ENCODE measurements at regions of chr10 and their contacts with region 1.

Region 1: DNA sequence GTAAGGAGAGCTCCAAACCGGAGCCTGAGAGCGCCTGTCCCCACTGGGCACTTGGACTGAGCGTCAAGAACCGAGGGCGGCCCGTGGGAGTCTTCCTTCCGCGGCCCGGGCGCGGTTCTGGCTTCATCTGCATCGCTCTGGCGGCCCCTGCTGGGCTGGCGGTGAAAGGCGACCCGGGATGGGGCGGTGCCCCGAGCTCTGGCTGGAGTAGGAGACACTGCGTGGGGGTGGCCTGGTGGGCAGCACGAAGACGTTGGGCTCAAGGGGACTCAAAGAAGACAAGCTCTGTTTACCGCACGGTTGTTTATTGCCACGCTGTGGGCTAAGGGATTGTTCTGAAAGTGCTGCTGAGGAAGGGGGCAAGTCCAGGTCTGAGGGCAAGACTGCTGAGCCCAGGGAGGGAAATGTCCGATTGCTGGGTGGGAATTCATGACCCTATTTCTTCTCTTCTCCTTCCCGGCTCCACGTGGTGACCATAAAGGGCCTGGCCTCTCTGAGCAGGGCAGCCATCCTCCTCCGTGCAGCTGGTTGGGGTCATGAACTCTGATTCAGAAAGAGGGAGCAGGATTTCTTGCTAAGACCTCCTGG is 29.8 kb downstream of the PLAU start:
- DNase-seq: peak; percentile 78
- ATAC-seq: peak; percentile 100
- H3K4me3 ChIP-seq: peak overlapping the region in 2 of 5 experiments; percentile 15 to 30
- H3K4me3 Mint-ChIP-seq: peak overlapping the region; percentile 71
- H3K27ac ChIP-seq: no peak overlapping the region
- H3K27ac Mint-ChIP-seq: peak overlapping the region; percentile 50
- H3K4me1 ChIP-seq: peaks cover 0 to 8% of the 10 kb centered on the region in 2 donors
- H3K4me1 Mint-ChIP-seq: peaks cover 7% of the 10 kb centered on the region
- H3K27me3 ChIP-seq: no peaks in the 10 kb centered on the region
- H3K27me3 Mint-ChIP-seq: peaks cover 4% of the 10 kb centered on the region
- CTCF ChIP-seq: peak; percentile 96

Region 2: GRCh38 chr10:73732931-73733623 is 207.7 kb before region 1 on chr10:
- CTCF ChIA-PET with region 1: no interaction called
- POLR2A ChIA-PET with region 1: no interaction called
- intact Hi-C with region 1: no loop called
- DNase-seq: no peak
- ATAC-seq: no peak
- H3K4me3 ChIP-seq: no peak overlapping the region
- H3K4me3 Mint-ChIP-seq: no peak overlapping the region
- H3K27ac ChIP-seq: no peak overlapping the region
- H3K27ac Mint-ChIP-seq: no peak overlapping the region
- H3K4me1 ChIP-seq: peaks cover 7 to 8% of the 10 kb centered on the region in 2 donors
- H3K4me1 Mint-ChIP-seq: peaks cover 20% of the 10 kb centered on the region
- H3K27me3 ChIP-seq: no peaks in the 10 kb centered on the region
- H3K27me3 Mint-ChIP-seq: no peaks in the 10 kb centered on the region
- CTCF ChIP-seq: no peak

Region 3: GRCh38 chr10:73848821-73849489 is 91.8 kb before region 1 on chr10:
- CTCF ChIA-PET with region 1: interaction called, 65 read pairs
- POLR2A ChIA-PET with region 1: interaction called, 4 read pairs
- intact Hi-C with region 1: loop called (anchors 1 kb)
- DNase-seq: peak; percentile 96
- ATAC-seq: peak; percentile 100
- H3K4me3 ChIP-seq: no peak overlapping the region
- H3K4me3 Mint-ChIP-seq: peak overlapping the region; percentile 12
- H3K27ac ChIP-seq: peak overlapping the region; percentile 51 to 71
- H3K27ac Mint-ChIP-seq: peak overlapping the region; percentile 47
- H3K4me1 ChIP-seq: peaks cover 7 to 17% of the 10 kb centered on the region in 2 donors
- H3K4me1 Mint-ChIP-seq: peaks cover 13% of the 10 kb centered on the region
- H3K27me3 ChIP-seq: no peaks in the 10 kb centered on the region
- H3K27me3 Mint-ChIP-seq: no peaks in the 10 kb centered on the region
- CTCF ChIP-seq: peak; percentile 99

Region 4: DNA sequence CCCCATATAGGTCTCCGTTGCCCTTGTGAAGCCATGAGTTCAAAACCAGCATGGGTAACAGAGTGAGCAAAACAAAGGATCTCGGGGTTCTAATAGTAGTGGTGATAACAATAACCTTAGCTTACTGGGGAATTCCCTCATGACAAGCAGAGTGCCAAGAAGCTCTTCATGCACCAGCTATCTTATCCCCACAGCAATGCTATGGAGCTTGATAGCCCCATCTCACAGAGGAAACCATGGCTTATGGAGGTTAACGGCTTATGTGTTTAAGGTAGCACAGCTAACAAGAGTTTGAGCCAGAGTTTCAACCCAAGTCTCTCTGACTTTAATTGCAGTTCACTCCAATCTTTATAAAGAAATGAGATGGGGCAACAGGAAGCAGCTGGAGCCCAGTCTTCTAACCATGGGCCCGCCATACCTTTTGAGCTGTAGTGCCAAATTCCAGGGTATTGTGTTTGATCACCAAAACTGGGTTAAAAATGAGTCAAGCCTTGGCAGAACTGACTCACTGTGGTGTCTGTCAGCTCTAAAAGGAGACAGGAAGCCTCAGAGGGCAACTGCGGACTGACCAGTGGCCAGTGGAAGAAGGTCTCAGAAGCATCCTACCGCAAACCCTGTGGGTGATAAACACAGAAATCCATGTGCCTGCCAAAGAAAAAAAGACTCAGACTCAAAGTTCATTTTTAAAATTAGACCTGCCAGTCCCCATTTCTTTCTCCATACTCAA is 46.3 kb before region 1 on chr10:
- CTCF ChIA-PET with region 1: interaction called, 261 read pairs
- POLR2A ChIA-PET with region 1: no interaction called
- intact Hi-C with region 1: no loop called
- DNase-seq: no peak
- ATAC-seq: no peak
- H3K4me3 ChIP-seq: no peak overlapping the region
- H3K4me3 Mint-ChIP-seq: no peak overlapping the region
- H3K27ac ChIP-seq: no peak overlapping the region
- H3K27ac Mint-ChIP-seq: no peak overlapping the region
- H3K4me1 ChIP-seq: peaks cover 0 to 8% of the 10 kb centered on the region in 2 donors
- H3K4me1 Mint-ChIP-seq: peaks cover 1% of the 10 kb centered on the region
- H3K27me3 ChIP-seq: peaks cover 0 to 4% (median 0%) of the 10 kb centered on the region in 4 experiments
- H3K27me3 Mint-ChIP-seq: no peaks in the 10 kb centered on the region
- CTCF ChIP-seq: no peak

Region 5: DNA sequence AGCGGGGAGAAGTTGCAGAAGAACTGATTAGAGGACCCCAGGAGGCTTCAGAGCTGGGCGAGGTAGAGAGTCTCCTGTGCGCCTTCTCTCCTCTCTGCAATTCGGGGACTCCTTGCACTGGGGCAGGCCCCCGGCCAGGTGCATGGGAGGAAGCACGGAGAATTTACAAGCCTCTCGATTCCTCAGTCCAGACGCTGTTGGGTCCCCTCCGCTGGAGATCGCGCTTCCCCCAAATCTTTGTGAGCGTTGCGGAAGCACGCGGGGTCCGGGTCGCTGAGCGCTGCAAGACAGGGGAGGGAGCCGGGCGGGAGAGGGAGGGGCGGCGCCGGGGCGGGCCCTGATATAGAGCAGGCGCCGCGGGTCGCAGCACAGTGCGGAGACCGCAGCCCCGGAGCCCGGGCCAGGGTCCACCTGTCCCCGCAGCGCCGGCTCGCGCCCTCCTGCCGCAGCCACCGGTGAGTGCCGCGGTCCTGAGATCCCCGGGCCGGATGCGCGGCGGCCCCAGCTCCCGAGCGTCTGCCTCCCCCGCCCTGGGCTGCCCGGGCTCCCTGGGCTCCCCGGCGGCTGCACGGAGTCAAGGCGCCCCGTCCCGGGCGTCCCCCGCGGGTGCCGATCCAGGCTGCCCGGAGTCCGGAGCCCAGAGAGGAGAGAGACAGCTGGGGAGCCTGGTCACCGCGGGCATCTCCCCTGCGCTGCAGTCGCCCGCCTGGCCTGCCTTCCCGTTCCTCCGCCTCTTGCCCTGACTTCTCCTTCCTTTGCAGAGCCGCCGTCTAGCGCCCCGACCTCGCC is 29.8 kb before region 1 on chr10 and contains the start of gene PLAU:
- CTCF ChIA-PET with region 1: interaction called, 11 read pairs
- POLR2A ChIA-PET with region 1: no interaction called
- intact Hi-C with region 1: no loop called
- DNase-seq: peak; percentile 59
- ATAC-seq: peak; percentile 62
- H3K4me3 ChIP-seq: peak within 1 kb of the TSS; percentile 9 to 63 (median 52)
- H3K4me3 Mint-ChIP-seq: peak within 1 kb of the TSS; percentile 97
- H3K27ac ChIP-seq: no peak within 1 kb of the TSS
- H3K27ac Mint-ChIP-seq: peak within 1 kb of the TSS; percentile 59
- H3K4me1 ChIP-seq: peaks cover 23 to 35% of the 10 kb centered on the region in 2 donors
- H3K4me1 Mint-ChIP-seq: peaks cover 34% of the 10 kb centered on the region
- H3K27me3 ChIP-seq: peaks cover 0 to 43% (median 16%) of the 10 kb centered on the region in 4 experiments
- H3K27me3 Mint-ChIP-seq: peaks cover 27% of the 10 kb centered on the region
- CTCF ChIP-seq: no peak
- total RNA-seq, gene PLAU: not detected in 2 replicates

Region 6: GRCh38 chr10:73956476-73957359 is 16.0 kb after region 1 on chr10:
- CTCF ChIA-PET with region 1: interaction called, 45 read pairs
- POLR2A ChIA-PET with region 1: no interaction called
- intact Hi-C with region 1: loop called (anchors 2 kb)
- DNase-seq: peak; percentile 82
- ATAC-seq: peak; percentile 61
- H3K4me3 ChIP-seq: peak overlapping the region; percentile 13 to 42 (median 24)
- H3K4me3 Mint-ChIP-seq: peak overlapping the region; percentile 83
- H3K27ac ChIP-seq: peak overlapping the region; percentile 92 to 93
- H3K27ac Mint-ChIP-seq: peak overlapping the region; percentile 99
- H3K4me1 ChIP-seq: peaks cover 50 to 54% of the 10 kb centered on the region in 2 donors
- H3K4me1 Mint-ChIP-seq: peaks cover 56% of the 10 kb centered on the region
- H3K27me3 ChIP-seq: no peaks in the 10 kb centered on the region
- H3K27me3 Mint-ChIP-seq: no peaks in the 10 kb centered on the region
- CTCF ChIP-seq: no peak

Region 7: GRCh38 chr10:73974309-73974946 is 33.7 kb after region 1 on chr10:
- CTCF ChIA-PET with region 1: no interaction called
- POLR2A ChIA-PET with region 1: no interaction called
- intact Hi-C with region 1: no loop called
- DNase-seq: no peak
- ATAC-seq: no peak
- H3K4me3 ChIP-seq: peak overlapping the region in 1 of 5 experiments; percentile 15
- H3K4me3 Mint-ChIP-seq: peak overlapping the region; percentile 8
- H3K27ac ChIP-seq: no peak overlapping the region
- H3K27ac Mint-ChIP-seq: no peak overlapping the region
- H3K4me1 ChIP-seq: peaks cover 10 to 14% of the 10 kb centered on the region in 2 donors
- H3K4me1 Mint-ChIP-seq: peaks cover 24% of the 10 kb centered on the region
- H3K27me3 ChIP-seq: no peaks in the 10 kb centered on the region
- H3K27me3 Mint-ChIP-seq: no peaks in the 10 kb centered on the region
- CTCF ChIP-seq: no peak

Region 8: DNA sequence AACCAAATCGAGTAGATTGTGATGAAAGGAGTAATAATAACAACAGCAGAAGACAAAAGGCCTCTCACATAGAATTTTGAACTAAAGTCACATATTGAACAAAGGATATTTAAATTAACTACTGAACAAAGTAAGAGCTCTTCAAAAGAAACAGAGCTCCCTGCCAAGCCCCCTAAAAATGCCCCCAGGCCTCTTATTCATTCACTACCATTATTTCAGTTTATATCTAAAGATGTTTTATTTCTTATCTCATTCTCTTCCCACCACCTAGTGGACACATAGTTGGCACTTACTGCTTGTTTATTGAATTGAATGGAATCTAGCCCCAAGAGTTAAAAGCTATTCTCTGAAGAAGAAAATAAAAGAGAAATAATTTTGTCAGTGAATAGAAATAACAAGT is 94.6 kb after region 1 on chr10:
- CTCF ChIA-PET with region 1: interaction called, 10 read pairs
- POLR2A ChIA-PET with region 1: no interaction called
- intact Hi-C with region 1: no loop called
- DNase-seq: no peak
- ATAC-seq: no peak
- H3K4me3 ChIP-seq: no peak overlapping the region
- H3K4me3 Mint-ChIP-seq: no peak overlapping the region
- H3K27ac ChIP-seq: peak overlapping the region in 1 of 2 donors; percentile 37
- H3K27ac Mint-ChIP-seq: peak overlapping the region; percentile 59
- H3K4me1 ChIP-seq: peaks cover 16 to 18% of the 10 kb centered on the region in 2 donors
- H3K4me1 Mint-ChIP-seq: peaks cover 41% of the 10 kb centered on the region
- H3K27me3 ChIP-seq: no peaks in the 10 kb centered on the region
- H3K27me3 Mint-ChIP-seq: no peaks in the 10 kb centered on the region
- CTCF ChIP-seq: no peak

Region 9: GRCh38 chr10:74081192-74081803 is 140.6 kb after region 1 on chr10:
- CTCF ChIA-PET with region 1: interaction called, 40 read pairs
- POLR2A ChIA-PET with region 1: no interaction called
- intact Hi-C with region 1: loop called (anchors 5 kb)
- DNase-seq: peak; percentile 66
- ATAC-seq: peak; percentile 50
- H3K4me3 ChIP-seq: no peak overlapping the region
- H3K4me3 Mint-ChIP-seq: no peak overlapping the region
- H3K27ac ChIP-seq: no peak overlapping the region
- H3K27ac Mint-ChIP-seq: no peak overlapping the region
- H3K4me1 ChIP-seq: peaks cover 18 to 20% of the 10 kb centered on the region in 2 donors
- H3K4me1 Mint-ChIP-seq: peaks cover 37% of the 10 kb centered on the region
- H3K27me3 ChIP-seq: no peaks in the 10 kb centered on the region
- H3K27me3 Mint-ChIP-seq: no peaks in the 10 kb centered on the region
- CTCF ChIP-seq: peak; percentile 71

Region 10: GRCh38 chr10:74244097-74244685 is 303.5 kb after region 1 on chr10:
- CTCF ChIA-PET with region 1: no interaction called
- POLR2A ChIA-PET with region 1: no interaction called
- intact Hi-C with region 1: no loop called
- DNase-seq: peak; percentile 51
- ATAC-seq: no peak
- H3K4me3 ChIP-seq: no peak overlapping the region
- H3K4me3 Mint-ChIP-seq: no peak overlapping the region
- H3K27ac ChIP-seq: no peak overlapping the region
- H3K27ac Mint-ChIP-seq: no peak overlapping the region
- H3K4me1 ChIP-seq: no peaks in the 10 kb centered on the region
- H3K4me1 Mint-ChIP-seq: peaks cover 4% of the 10 kb centered on the region
- H3K27me3 ChIP-seq: no peaks in the 10 kb centered on the region
- H3K27me3 Mint-ChIP-seq: no peaks in the 10 kb centered on the region
- CTCF ChIP-seq: peak; percentile 78

Region 11: DNA sequence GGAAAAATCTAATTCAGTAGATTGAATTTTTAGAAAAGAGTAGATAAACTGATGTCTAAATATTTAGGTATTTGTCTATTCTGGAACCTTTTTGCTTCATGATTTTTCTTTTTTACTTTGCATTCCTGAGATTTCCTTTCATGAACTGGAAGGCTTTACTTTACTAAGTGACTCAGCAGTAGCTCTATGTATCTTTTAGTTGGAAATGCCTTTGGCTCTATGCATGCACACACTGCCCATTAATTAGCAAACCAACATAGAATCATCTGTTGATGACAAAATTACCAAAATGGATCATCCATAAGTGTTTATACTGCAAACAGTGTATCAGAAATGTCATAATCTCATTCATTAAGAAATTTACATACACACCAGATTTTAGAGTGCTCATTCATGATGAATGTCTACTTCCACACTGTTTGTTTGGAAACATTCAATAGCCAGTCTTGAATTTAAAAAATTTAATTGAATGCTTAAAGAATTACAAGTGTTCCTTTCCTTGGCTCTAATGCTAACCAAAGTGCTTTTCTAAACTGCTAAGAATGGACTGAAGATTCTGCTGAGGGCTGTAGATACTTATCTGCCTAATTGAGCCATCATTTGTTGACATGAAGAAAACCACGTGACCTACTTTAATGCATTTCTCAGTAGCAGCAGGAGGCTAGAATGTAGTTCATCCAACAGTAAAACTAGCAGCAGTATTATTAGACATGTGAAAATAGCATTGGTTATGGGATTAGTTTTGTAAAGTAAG is 492.3 kb after region 1 on chr10:
- CTCF ChIA-PET with region 1: no interaction called
- POLR2A ChIA-PET with region 1: no interaction called
- intact Hi-C with region 1: no loop called
- DNase-seq: no peak
- ATAC-seq: no peak
- H3K4me3 ChIP-seq: no peak overlapping the region
- H3K4me3 Mint-ChIP-seq: no peak overlapping the region
- H3K27ac ChIP-seq: no peak overlapping the region
- H3K27ac Mint-ChIP-seq: no peak overlapping the region
- H3K4me1 ChIP-seq: no peaks in the 10 kb centered on the region
- H3K4me1 Mint-ChIP-seq: no peaks in the 10 kb centered on the region
- H3K27me3 ChIP-seq: no peaks in the 10 kb centered on the region
- H3K27me3 Mint-ChIP-seq: no peaks in the 10 kb centered on the region
- CTCF ChIP-seq: no peak